T-cell (primary cell): ENCODE measurements at regions of chr13 and their contacts with region 1.

Region 1: DNA sequence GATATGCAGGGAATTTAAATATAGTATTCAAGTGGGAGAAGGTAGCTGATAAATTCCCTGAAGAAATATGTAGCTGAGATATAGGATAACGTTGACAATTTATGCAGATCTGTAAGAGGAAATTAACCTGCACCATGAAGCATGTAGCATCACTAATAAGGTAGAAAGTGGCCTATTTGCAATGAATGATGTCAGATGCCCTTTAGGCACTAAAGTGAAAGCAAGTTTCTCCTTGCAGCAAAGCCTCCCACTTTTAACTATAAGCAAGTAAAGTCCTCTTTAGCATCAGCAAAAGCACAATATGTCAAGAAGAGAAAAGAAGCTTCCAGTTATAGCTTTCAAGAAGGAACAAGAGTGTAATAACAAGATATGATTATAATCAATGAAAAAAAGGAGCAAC is 102.5 kb upstream of the SLITRK1 start:
- DNase-seq: no peak
- ATAC-seq: no peak
- H3K4me3 ChIP-seq: no peak overlapping the region
- H3K4me3 Mint-ChIP-seq: no peak overlapping the region
- H3K27ac ChIP-seq: no peak overlapping the region
- H3K27ac Mint-ChIP-seq: no peak overlapping the region
- H3K4me1 ChIP-seq: no peaks in the 10 kb centered on the region
- H3K4me1 Mint-ChIP-seq: peaks cover 0 to 3% (median 3%) of the 10 kb centered on the region in 3 donors
- H3K27me3 ChIP-seq: no peaks in the 10 kb centered on the region
- H3K27me3 Mint-ChIP-seq: no peaks in the 10 kb centered on the region

Region 2: DNA sequence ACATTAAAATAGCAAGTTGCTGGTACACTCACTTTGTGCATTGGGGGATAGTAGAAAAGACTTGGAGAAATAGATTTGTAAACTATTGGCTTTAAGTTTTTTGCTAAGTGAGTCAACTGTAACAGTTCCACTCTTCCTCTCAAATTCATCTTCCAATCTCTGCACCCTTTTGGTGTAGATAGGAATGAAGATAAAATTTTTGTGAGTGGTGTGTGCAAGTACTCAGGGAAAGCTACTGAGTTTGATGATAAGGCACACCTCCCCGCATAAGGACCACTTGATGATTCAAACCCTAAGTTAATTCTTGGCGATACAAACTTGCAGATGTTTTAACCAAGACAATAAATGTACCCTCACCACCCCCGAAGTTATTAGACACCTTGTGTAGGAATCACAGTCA is 65.7 kb after region 1 on chr13:
- CTCF ChIA-PET with region 1: interaction called in 1 of 2 experiments, 11 read pairs
- POLR2A ChIA-PET with region 1: no interaction called
- DNase-seq: no peak
- ATAC-seq: no peak
- H3K4me3 ChIP-seq: no peak overlapping the region
- H3K4me3 Mint-ChIP-seq: no peak overlapping the region
- H3K27ac ChIP-seq: no peak overlapping the region
- H3K27ac Mint-ChIP-seq: no peak overlapping the region
- H3K4me1 ChIP-seq: no peaks in the 10 kb centered on the region
- H3K4me1 Mint-ChIP-seq: no peaks in the 10 kb centered on the region
- H3K27me3 ChIP-seq: no peaks in the 10 kb centered on the region
- H3K27me3 Mint-ChIP-seq: no peaks in the 10 kb centered on the region